Naive thymus-derived CD4-positive, alpha-beta T cell (primary cell): ENCODE measurements at regions of chr4 and their contacts with region 1.

Region 1: GRCh38 chr4:2418650-2419571 is at the start of gene CFAP99:
- DNase-seq: peak; percentile 89 to 97 (median 93)
- ATAC-seq: peak; percentile 95
- H3K4me3 ChIP-seq: peak within 1 kb of the TSS; percentile 70
- H3K4me3 Mint-ChIP-seq: peak within 1 kb of the TSS; percentile 85 to 98 (median 92)
- H3K27ac ChIP-seq: peak within 1 kb of the TSS; percentile 73
- H3K27ac Mint-ChIP-seq: peak within 1 kb of the TSS; percentile 81 to 98 (median 90)
- H3K4me1 ChIP-seq: peaks cover 24 to 28% of the 10 kb centered on the region in 2 donors
- H3K4me1 Mint-ChIP-seq: peaks cover 33 to 46% (median 40%) of the 10 kb centered on the region in 7 donors
- H3K27me3 ChIP-seq: no peaks in the 10 kb centered on the region
- H3K27me3 Mint-ChIP-seq: peaks cover 8 to 67% (median 13%) of the 10 kb centered on the region in 5 donors
- total RNA-seq, gene CFAP99: 0.12 to 0.27 TPM in 2 of 5 experiments, not detected in the others

Region 2: DNA sequence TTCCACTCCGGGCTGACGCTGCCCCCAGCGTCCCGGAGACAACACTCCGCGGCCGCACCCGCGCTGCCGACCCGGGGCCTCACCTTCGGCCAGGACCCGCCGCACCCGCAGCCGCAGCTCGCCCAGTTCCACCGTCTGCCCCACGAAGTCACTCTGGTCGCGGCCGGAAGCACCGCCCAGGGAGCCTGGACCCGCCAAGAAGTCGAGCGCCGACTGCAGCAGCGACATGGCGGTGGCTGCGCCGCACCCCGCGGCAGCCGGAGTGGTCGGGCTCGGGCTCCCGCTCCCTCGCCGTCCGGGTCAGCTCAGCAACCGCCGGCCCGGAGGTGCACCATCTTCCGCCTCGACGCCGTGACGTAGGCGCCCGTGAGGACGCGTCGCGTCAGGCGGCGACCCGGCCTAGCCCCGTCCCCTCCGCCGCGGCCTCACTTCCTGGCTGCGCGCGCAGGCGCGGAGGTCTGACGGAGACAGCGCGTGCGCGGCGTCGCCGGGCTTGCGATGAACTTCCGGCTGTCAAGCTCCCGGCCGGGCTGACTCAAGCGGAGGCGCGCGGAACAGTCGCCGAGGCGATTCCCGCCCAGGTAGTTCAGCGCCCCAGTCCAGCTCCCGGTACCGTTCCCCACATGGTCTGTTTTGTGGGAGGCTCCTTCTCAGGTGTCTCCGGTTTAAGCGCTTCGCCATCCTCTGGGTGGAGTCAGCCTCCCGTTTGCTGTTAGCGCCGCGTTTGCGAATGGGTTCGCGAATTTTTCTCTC is 1486.8 kb before region 1 on chr4 and contains the starts of genes GAK and TMEM175:
- CTCF ChIA-PET with region 1: no interaction called
- POLR2A ChIA-PET with region 1: no interaction called
- intact Hi-C with region 1: loop called in 1 of 2 experiments (anchors 10 kb)
- DNase-seq: peak; percentile 93 to 99 (median 98)
- ATAC-seq: peak; percentile 95
- H3K4me3 ChIP-seq: peak within 1 kb of the TSS; percentile 83
- H3K4me3 Mint-ChIP-seq: peak within 1 kb of the TSS; percentile 89 to 99 (median 95)
- H3K27ac ChIP-seq: peak within 1 kb of the TSS; percentile 99
- H3K27ac Mint-ChIP-seq: peak within 1 kb of the TSS; percentile 92 to 97 (median 96)
- H3K4me1 ChIP-seq: peaks cover 24 to 35% of the 10 kb centered on the region in 2 donors
- H3K4me1 Mint-ChIP-seq: peaks cover 35 to 59% (median 48%) of the 10 kb centered on the region in 7 donors
- H3K27me3 ChIP-seq: no peaks in the 10 kb centered on the region
- H3K27me3 Mint-ChIP-seq: no peaks in the 10 kb centered on the region
- total RNA-seq, gene GAK: 167 to 206 (median 174) TPM
- total RNA-seq, gene TMEM175: 28.9 to 69.9 (median 64.9) TPM

Region 3: GRCh38 chr4:2008875-2009703 is 409.8 kb before region 1 on chr4 and contains the start of gene NELFA:
- CTCF ChIA-PET with region 1: no interaction called
- POLR2A ChIA-PET with region 1: no interaction called
- intact Hi-C with region 1: loop called (anchors 1 kb)
- DNase-seq: peak; percentile 92 to 98 (median 96)
- ATAC-seq: peak; percentile 93
- H3K4me3 ChIP-seq: peak within 1 kb of the TSS; percentile 96
- H3K4me3 Mint-ChIP-seq: peak within 1 kb of the TSS; percentile 81 to 96 (median 94)
- H3K27ac ChIP-seq: peak within 1 kb of the TSS; percentile 99
- H3K27ac Mint-ChIP-seq: peak within 1 kb of the TSS; percentile 91 to 99 (median 96)
- H3K4me1 ChIP-seq: peaks cover 13 to 24% of the 10 kb centered on the region in 2 donors
- H3K4me1 Mint-ChIP-seq: peaks cover 30 to 38% (median 34%) of the 10 kb centered on the region in 7 donors
- H3K27me3 ChIP-seq: no peaks in the 10 kb centered on the region
- H3K27me3 Mint-ChIP-seq: peaks cover 0 to 20% (median 0%) of the 10 kb centered on the region in 5 donors
- total RNA-seq, gene NELFA: 32.7 to 50.1 (median 43.6) TPM

Region 4: DNA sequence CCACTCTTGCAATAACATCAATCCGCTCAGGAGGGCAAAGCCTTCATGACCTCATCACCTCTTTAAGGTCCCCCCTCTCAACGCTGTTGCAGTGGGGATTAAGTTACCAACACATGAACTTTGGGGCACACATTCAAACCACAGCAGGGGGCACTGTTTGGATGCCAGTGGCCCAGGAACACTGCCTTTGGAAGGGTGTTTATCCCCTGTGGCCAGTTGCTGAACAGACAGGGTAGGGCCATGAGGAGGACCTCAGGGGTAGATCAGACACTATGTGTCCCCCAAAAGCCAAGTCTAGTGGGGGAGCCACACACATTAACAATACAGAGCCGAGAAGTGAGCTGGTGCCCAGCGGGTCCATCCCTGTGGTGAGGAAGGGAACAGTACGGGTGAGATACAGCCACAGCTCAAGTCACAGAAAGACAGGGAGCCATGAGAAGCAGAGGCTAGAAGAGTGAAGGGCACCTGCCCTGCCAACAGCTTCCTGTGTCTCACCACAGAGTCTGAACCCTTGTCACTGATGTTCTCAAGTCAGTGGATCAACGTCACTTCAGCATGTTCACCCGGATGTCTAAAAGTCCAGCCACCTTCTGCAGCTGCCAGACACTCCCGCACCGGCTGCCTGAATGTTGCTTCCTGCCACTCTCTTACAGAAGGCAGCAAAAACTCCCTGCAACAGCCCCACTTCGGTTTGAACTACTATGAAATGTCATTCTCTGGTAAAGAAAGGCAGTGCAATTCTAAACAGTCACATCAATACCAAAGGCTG is 137.2 kb before region 1 on chr4:
- CTCF ChIA-PET with region 1: no interaction called
- POLR2A ChIA-PET with region 1: no interaction called
- intact Hi-C with region 1: loop called in 1 of 2 experiments (anchors 1 kb)
- DNase-seq: peak; percentile 51 to 96 (median 94)
- ATAC-seq: peak; percentile 95
- H3K4me3 ChIP-seq: peak overlapping the region; percentile 33
- H3K4me3 Mint-ChIP-seq: peak overlapping the region; percentile 73 to 90 (median 84)
- H3K27ac ChIP-seq: peak overlapping the region; percentile 81
- H3K27ac Mint-ChIP-seq: peak overlapping the region; percentile 91 to 100 (median 99)
- H3K4me1 ChIP-seq: peaks cover 31 to 34% of the 10 kb centered on the region in 2 donors
- H3K4me1 Mint-ChIP-seq: peaks cover 27 to 64% (median 50%) of the 10 kb centered on the region in 7 donors
- H3K27me3 ChIP-seq: no peaks in the 10 kb centered on the region
- H3K27me3 Mint-ChIP-seq: no peaks in the 10 kb centered on the region

Region 5: GRCh38 chr4:2462218-2462991 is 43.5 kb after region 1 on chr4:
- CTCF ChIA-PET with region 1: no interaction called
- POLR2A ChIA-PET with region 1: no interaction called
- intact Hi-C with region 1: loop called in 1 of 2 experiments (anchors 1 kb)
- DNase-seq: peak; percentile 42 to 76 (median 66)
- ATAC-seq: peak; percentile 97
- H3K4me3 ChIP-seq: peak overlapping the region; percentile 44
- H3K4me3 Mint-ChIP-seq: peak overlapping the region; percentile 65 to 87 (median 81)
- H3K27ac ChIP-seq: peak overlapping the region; percentile 41
- H3K27ac Mint-ChIP-seq: peak overlapping the region in 2 of 9 donors; percentile 14 to 45
- H3K4me1 ChIP-seq: peaks cover 0 to 5% of the 10 kb centered on the region in 2 donors
- H3K4me1 Mint-ChIP-seq: peaks cover 6 to 21% (median 16%) of the 10 kb centered on the region in 7 donors
- H3K27me3 ChIP-seq: no peaks in the 10 kb centered on the region
- H3K27me3 Mint-ChIP-seq: peaks cover 0 to 38% (median 7%) of the 10 kb centered on the region in 5 donors

Region 6: GRCh38 chr4:2478239-2478638 is 59.3 kb after region 1 on chr4:
- CTCF ChIA-PET with region 1: no interaction called
- POLR2A ChIA-PET with region 1: no interaction called
- intact Hi-C with region 1: no loop called
- DNase-seq: no peak
- ATAC-seq: no peak
- H3K4me3 ChIP-seq: no peak overlapping the region
- H3K4me3 Mint-ChIP-seq: peak overlapping the region in 8 of 10 donors; percentile 12 to 79 (median 63)
- H3K27ac ChIP-seq: no peak overlapping the region
- H3K27ac Mint-ChIP-seq: peak overlapping the region in 7 of 9 donors; percentile 14 to 72 (median 22)
- H3K4me1 ChIP-seq: peaks cover 56 to 59% of the 10 kb centered on the region in 2 donors
- H3K4me1 Mint-ChIP-seq: peaks cover 64 to 98% (median 77%) of the 10 kb centered on the region in 7 donors
- H3K27me3 ChIP-seq: no peaks in the 10 kb centered on the region
- H3K27me3 Mint-ChIP-seq: no peaks in the 10 kb centered on the region

Region 7: GRCh38 chr4:2934813-2935761 is 516.2 kb after region 1 on chr4:
- CTCF ChIA-PET with region 1: no interaction called
- POLR2A ChIA-PET with region 1: no interaction called
- intact Hi-C with region 1: loop called in 1 of 2 experiments (anchors 10 kb)
- DNase-seq: peak; percentile 90 to 99 (median 95)
- ATAC-seq: peak; percentile 81
- H3K4me3 ChIP-seq: peak overlapping the region; percentile 97
- H3K4me3 Mint-ChIP-seq: peak overlapping the region; percentile 76 to 91 (median 84)
- H3K27ac ChIP-seq: peak overlapping the region; percentile 92
- H3K27ac Mint-ChIP-seq: peak overlapping the region; percentile 67 to 91 (median 87)
- H3K4me1 ChIP-seq: peaks cover 38 to 46% of the 10 kb centered on the region in 2 donors
- H3K4me1 Mint-ChIP-seq: peaks cover 17 to 44% (median 37%) of the 10 kb centered on the region in 7 donors
- H3K27me3 ChIP-seq: no peaks in the 10 kb centered on the region
- H3K27me3 Mint-ChIP-seq: no peaks in the 10 kb centered on the region